ENCODE measurements at regions of chr1 and their contacts with region 1.

Region 1: GRCh38 chr1:66739401-66740157 is 12.7 kb upstream of the DYNLT5 start:
- DNase-seq: no peak
- ATAC-seq: peak; percentile 27
- H3K4me3 Mint-ChIP-seq: no peak overlapping the region
- H3K27ac Mint-ChIP-seq: no peak overlapping the region
- H3K4me1 Mint-ChIP-seq: peaks cover 8% of the 10 kb centered on the region
- H3K27me3 Mint-ChIP-seq: peaks cover 6% of the 10 kb centered on the region

Region 2: GRCh38 chr1:66585002-66585401 is 154.6 kb before region 1 on chr1:
- CTCF ChIA-PET with region 1: no interaction called
- DNase-seq: no peak
- ATAC-seq: no peak
- H3K4me3 Mint-ChIP-seq: no peak overlapping the region
- H3K27ac Mint-ChIP-seq: no peak overlapping the region
- H3K4me1 Mint-ChIP-seq: no peaks in the 10 kb centered on the region
- H3K27me3 Mint-ChIP-seq: peaks cover 30% of the 10 kb centered on the region

Region 3: GRCh38 chr1:66725885-66726665 is 13.5 kb before region 1 on chr1:
- CTCF ChIA-PET with region 1: interaction called, 16 read pairs
- DNase-seq: peak; percentile 68
- ATAC-seq: peak; percentile 76
- H3K4me3 Mint-ChIP-seq: no peak overlapping the region
- H3K27ac Mint-ChIP-seq: no peak overlapping the region
- H3K4me1 Mint-ChIP-seq: peaks cover 15% of the 10 kb centered on the region
- H3K27me3 Mint-ChIP-seq: peaks cover 31% of the 10 kb centered on the region

Measured in activated CD8-positive, alpha-beta memory T cell treated with anti-CD3 and anti-CD28 coated beads, Interleukin-2, amount 10 ng/mL, durations not matched to agents 7 days and 5 days (primary cell).